Activated CD8-positive, alpha-beta T cell treated with anti-CD3 and anti-CD28 coated beads, Interleukin-2, amount 10 ng/mL, durations not matched to agents 7 days and 5 days (primary cell): ENCODE measurements at regions of chr7 and their contacts with region 1.

Region 1: GRCh38 chr7:129376076-129376777 is 58.0 kb upstream of the STRIP2 start:
- DNase-seq: peak; percentile 61
- ATAC-seq: peak; percentile 79
- H3K4me3 Mint-ChIP-seq: no peak overlapping the region
- H3K27ac Mint-ChIP-seq: no peak overlapping the region
- H3K4me1 Mint-ChIP-seq: peaks cover 16% of the 10 kb centered on the region
- H3K27me3 Mint-ChIP-seq: no peaks in the 10 kb centered on the region

Region 2: DNA sequence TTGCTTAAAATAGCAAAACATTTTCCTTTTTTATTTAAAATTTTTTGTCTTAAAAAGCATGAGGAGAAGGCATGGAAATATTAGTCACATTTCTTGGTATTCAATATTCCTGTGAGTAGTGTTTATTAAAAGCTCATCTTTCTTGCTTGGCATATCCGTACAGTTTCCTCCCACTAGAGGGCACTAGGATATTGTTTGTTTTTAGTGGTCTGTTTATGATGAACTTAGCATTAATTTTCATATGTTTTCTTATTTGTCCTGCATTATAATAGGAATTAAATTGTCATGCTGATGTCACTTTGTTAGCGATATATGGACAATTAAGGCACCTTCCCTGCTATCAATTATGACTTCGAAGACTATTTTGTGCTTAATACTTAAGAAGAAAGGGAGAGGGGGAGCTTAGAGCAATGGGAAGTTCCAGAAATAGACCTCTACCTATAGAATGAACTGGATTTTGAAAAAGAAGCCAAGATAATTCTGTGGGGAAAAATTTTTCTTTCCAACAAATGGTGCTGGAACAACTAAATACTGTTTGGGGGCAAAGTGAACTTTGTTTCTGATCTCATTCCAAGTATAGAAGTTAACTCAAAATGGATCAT is 33.0 kb before region 1 on chr7:
- CTCF ChIA-PET with region 1: interaction called, 49 read pairs
- POLR2A ChIA-PET with region 1: no interaction called
- DNase-seq: peak; percentile 44
- ATAC-seq: peak; percentile 52
- H3K4me3 Mint-ChIP-seq: no peak overlapping the region
- H3K27ac Mint-ChIP-seq: no peak overlapping the region
- H3K4me1 Mint-ChIP-seq: peaks cover 41% of the 10 kb centered on the region
- H3K27me3 Mint-ChIP-seq: no peaks in the 10 kb centered on the region

Region 3: DNA sequence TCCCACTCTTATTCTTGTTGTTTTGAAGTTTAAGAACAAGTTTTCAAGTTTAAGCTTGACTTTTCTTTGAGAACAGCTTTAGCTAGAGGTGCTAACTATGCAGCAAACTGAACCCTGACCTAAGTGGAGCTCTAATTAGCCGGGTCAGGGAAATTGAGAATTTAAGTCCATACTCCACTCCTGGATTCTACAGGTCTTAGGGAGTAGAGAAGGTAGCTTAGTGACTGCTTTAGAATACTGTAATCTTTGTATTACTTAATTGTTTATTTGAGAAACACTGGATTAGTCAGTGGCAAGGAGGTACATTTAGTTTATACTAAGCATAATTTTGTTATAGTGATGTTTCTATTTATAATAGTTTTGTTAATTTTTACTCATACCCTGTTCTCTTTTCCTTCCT is 16.6 kb before region 1 on chr7:
- CTCF ChIA-PET with region 1: interaction called, 34 read pairs
- POLR2A ChIA-PET with region 1: no interaction called
- DNase-seq: no peak
- ATAC-seq: no peak
- H3K4me3 Mint-ChIP-seq: no peak overlapping the region
- H3K27ac Mint-ChIP-seq: no peak overlapping the region
- H3K4me1 Mint-ChIP-seq: peaks cover 6% of the 10 kb centered on the region
- H3K27me3 Mint-ChIP-seq: no peaks in the 10 kb centered on the region

Region 4: GRCh38 chr7:129401967-129402860 is 26.0 kb after region 1 on chr7:
- CTCF ChIA-PET with region 1: interaction called, 12 read pairs
- POLR2A ChIA-PET with region 1: no interaction called
- DNase-seq: peak; percentile 26
- ATAC-seq: peak; percentile 47
- H3K4me3 Mint-ChIP-seq: no peak overlapping the region
- H3K27ac Mint-ChIP-seq: no peak overlapping the region
- H3K4me1 Mint-ChIP-seq: no peaks in the 10 kb centered on the region
- H3K27me3 Mint-ChIP-seq: no peaks in the 10 kb centered on the region

Region 5: GRCh38 chr7:129468087-129468486 is 91.9 kb after region 1 on chr7:
- CTCF ChIA-PET with region 1: interaction called, 17 read pairs
- POLR2A ChIA-PET with region 1: no interaction called
- DNase-seq: no peak
- ATAC-seq: no peak
- H3K4me3 Mint-ChIP-seq: no peak overlapping the region
- H3K27ac Mint-ChIP-seq: no peak overlapping the region
- H3K4me1 Mint-ChIP-seq: no peaks in the 10 kb centered on the region
- H3K27me3 Mint-ChIP-seq: no peaks in the 10 kb centered on the region